Posterior cingulate gyrus (tissue), 11 donors: ENCODE measurements at regions of chr5 and their contacts with region 1.

Region 1: GRCh38 chr5:55534436-55535198 is at the start of gene PLPP1:
- DNase-seq: peak; percentile 89 to 99 (median 94)

Region 2: DNA sequence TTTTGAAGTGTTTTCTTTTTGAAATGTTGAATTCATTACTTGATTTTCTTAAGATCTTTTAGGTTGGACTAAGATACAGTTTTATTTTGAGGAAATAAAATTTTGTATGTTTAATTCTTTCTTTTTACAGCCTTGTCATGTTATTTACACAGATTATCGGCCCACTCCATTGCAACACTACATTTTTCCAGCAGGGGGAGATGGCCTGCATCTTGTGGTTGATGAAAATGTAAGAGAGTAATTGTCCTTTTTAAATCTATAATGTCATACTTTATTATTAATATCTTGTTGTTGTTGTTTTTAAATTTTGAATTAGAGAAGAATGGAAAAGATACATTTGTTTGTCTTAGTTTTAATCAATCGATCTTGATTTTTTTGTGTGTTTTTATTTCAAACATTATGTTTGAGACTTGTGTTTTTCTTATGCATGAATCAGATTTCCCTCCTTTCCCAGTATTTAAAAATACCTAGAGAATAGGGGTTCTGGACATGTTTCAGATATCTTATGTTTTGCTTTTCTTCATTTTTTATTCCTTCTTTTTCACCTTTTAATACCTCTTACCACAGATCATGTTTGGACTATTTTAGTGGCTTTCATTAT is 190.1 kb before region 1 on chr5:
- intact Hi-C with region 1: loop called (anchors 10 kb)
- DNase-seq: peak in 7 of 10 donors; percentile 35 to 88 (median 69)

Region 3: GRCh38 chr5:55407059-55407684 is 127.4 kb before region 1 on chr5:
- intact Hi-C with region 1: loop called (anchors 5 kb)
- DNase-seq: peak in 2 of 10 donors; percentile 58 to 85

Region 4: DNA sequence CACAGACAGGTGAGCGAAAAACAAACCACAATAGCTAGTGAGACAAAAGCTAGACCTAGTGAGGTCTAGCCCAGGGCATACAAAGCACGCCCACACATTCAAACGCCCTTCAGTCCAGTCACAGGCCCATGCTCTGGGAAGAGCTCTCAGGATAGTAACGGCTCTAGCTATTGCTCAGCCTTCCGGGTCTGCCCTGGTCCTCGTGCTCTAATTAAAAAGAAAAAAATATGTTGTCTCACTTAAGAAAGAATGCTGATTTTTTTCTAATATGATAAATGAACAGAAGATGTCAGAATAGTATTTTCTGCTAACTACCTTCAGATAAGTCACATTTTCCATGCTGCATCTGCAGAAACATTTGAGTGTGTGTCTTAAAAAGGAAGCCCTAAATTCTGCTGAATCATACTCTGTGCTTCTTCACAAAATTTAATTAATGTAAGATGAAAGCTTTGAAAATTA is 94.4 kb before region 1 on chr5:
- intact Hi-C with region 1: loop called (anchors 10 kb)
- DNase-seq: no peak

Region 5: DNA sequence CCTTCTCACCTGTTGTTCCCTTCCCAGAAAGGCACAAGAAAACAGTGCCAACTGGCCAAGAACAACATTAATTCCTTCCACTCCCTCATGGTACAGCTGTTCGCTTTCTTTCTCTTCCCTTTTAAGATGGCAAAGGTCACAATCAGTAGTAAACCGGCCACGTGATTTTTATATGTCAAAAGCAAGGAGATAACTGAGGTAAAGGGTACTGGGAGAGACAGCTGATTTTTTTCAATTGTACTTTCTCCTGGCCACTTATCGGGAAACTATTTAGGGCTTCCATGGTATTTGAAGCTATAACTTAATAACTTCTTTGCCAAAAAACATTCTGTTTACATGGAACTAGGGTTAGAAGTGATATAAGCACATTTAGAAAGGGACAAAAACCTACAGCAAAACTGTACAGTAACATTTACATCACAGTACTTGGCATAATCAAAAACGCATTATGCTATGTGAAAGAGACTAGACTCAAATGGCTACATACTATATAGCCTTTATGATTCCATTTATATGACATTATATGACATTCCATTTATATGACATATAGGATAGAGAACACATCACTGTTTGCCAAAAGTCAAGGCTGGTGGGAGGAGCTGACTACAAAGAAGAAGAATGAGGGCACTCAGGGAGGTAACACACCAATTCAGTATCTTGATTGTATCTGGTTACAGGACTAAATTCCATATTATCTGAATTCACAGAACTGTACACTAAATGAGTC is 24.7 kb before region 1 on chr5:
- intact Hi-C with region 1: no loop called
- DNase-seq: no peak

Region 6: DNA sequence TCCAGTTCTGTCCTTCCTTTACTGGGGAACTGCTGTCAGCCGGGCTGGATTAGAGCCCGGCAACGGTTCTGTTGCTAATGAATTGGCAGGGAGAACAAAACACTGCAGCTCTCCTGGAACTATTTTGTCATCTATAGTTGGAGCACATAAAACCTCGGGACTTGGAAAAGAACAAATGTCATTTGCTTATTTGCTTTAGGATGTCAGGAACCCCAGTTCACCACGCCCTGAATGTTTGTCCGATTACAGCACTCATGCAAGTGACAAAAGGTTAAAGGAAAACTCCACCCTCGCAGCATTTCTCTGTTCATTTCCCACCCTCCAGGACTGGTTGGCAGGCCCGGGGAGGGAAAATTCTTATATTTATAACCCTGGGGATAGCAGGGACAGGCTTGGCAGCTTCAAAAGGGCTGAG is 66.6 kb after region 1 on chr5:
- intact Hi-C with region 1: loop called (anchors 1 kb)
- DNase-seq: peak; percentile 45 to 93 (median 69)

Region 7: GRCh38 chr5:55680353-55680752 is 145.7 kb after region 1 on chr5:
- intact Hi-C with region 1: loop called (anchors 10 kb)
- DNase-seq: no peak